Mammary epithelial cell (primary cell): ENCODE measurements at regions of chr18 and their contacts with region 1.

Region 1: GRCh38 chr18:3665780-3666525 is 216.0 kb downstream of the TGIF1 start:
- DNase-seq: peak; percentile 81
- H3K4me3 ChIP-seq: peak overlapping the region; percentile 8 to 33 (median 8)
- H3K27ac ChIP-seq: peak overlapping the region; percentile 74
- H3K4me1 ChIP-seq: peaks cover 26% of the 10 kb centered on the region
- H3K27me3 ChIP-seq: no peaks in the 10 kb centered on the region
- CTCF ChIP-seq: peak; percentile 90 to 96

Region 2: DNA sequence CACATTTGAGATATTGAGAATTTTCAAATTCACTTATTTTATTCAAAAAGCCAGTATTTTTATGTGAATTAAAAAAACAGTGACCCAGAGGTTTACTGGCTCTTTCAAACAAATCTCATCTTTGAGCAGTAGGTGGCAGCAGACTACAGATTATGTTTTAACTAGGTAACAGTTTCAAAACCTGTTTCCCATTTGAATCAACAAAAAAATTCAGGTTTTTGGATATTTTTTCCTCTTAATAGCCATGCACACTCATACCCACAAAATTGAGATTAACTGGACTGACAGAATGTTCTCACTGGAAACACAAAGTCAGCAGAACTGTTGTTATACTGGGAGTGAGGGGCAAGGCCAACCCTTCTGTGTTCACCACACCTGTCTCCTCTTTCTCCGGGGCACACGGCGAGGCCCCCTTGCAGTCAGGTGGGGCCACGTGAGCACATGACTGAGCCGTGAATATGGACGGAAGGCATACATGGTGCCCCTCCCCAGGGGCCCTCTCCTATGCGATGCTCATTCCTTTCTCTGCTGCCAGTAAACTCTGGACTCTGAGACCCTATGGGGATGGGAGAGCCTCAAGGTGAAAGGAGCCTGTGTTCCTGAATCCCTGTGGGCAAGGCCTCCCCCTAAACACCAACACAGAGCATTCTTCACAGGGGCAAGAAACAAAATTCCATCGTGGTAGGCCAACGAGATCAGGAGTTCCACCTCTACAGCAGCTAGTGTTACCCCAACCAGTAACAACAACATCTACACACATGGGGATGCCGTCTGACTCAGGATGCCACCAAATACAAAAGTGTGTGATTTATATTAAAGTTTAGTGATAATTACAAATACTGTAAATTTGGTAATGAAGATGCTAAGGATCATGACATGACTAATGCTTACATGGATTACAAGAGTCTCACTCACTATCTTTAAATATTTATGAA is 733.4 kb before region 1 on chr18:
- CTCF ChIA-PET with region 1: no interaction called
- dilution Hi-C with region 1: no loop called
- in situ Hi-C with region 1: no loop called
- intact Hi-C with region 1: loop called (anchors 2 kb)
- DNase-seq: peak; percentile 29
- H3K4me3 ChIP-seq: no peak overlapping the region
- H3K27ac ChIP-seq: no peak overlapping the region
- H3K4me1 ChIP-seq: no peaks in the 10 kb centered on the region
- H3K27me3 ChIP-seq: no peaks in the 10 kb centered on the region
- CTCF ChIP-seq: peak; percentile 61 to 65

Region 3: DNA sequence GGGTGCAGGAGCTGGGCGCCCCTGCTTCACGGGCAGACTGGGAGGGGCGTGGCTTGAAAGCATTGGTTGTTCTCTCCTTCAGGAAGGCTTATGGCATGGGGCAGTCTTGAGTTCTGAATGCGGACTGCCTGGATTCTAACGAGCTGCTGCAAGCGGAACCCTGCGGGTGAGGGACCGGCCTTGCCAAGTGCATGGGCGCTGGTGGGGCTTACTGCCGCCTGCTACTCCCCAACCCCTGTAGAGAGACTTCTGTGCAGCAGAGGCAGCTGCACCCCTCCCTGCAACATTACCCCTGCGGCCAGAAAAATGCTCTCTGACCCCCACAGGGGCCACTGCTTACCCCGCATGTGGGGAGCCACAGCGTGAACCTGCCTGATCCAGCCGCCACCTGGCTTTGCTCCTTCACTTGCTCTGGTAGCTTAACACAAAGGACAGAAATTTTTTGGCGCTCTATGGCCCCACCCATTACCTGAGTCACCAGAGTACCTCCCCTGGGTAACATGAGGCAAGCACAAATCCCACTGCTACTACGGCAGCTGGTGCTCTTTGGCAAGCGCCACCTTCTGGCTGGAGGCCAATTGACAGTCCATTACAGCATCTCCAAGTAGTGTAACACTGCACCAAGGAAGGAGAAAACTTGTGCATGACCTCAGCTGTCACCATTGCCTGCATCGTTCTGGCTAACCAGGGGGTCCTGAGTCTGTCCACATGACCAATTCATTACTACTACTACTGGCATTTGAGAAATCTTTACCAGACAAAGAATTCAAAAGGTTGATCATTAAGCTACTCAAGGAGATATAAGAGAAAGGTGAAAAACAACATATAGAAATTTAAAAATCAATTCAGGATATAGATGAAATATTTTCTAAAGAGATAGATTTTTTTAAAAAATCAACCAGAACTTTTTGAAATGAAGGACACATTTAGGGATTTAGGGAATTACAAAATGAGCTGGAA is 368.6 kb before region 1 on chr18:
- CTCF ChIA-PET with region 1: interaction called, 9 read pairs
- dilution Hi-C with region 1: no loop called
- in situ Hi-C with region 1: no loop called
- intact Hi-C with region 1: loop called (anchors 5 kb)
- DNase-seq: peak; percentile 93
- H3K4me3 ChIP-seq: peak overlapping the region; percentile 68 to 79 (median 68)
- H3K27ac ChIP-seq: peak overlapping the region; percentile 72
- H3K4me1 ChIP-seq: peaks cover 7% of the 10 kb centered on the region
- H3K27me3 ChIP-seq: no peaks in the 10 kb centered on the region
- CTCF ChIP-seq: peak; percentile 69 to 84

Region 4: DNA sequence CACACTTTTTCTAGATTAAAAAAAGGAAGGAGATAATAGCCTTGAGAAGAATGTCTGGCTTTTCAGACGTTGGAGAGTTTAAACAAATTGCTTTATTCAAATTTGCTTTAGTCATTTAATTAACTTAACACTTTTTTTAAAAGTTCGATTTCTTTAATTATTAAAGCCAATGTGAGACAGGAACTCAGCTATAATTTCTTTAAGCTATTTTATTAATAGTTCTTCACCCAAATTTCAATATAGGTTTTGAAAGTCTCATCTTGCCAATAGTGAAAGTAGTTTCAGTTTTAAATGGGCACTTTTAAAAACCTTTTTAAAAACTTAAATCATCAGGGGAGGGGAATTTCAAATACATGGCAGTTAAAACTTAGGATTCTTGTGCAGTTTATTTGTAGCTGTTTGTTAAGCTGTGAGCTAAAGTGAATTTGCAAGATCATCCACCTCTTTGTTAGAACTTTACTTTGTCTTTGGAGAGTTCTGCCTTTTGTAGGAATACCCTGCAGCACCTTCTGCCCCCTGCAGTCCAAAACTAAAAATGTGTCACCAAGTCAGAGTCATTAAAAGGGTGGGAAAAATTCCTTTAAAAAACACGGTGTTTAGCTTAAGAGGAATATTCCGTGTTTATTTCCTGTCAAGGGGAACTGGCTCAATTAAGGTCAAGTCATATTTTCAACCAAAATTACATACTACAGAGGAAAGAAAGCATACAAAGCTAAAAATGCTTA is 211.4 kb before region 1 on chr18:
- CTCF ChIA-PET with region 1: no interaction called
- dilution Hi-C with region 1: loop called (anchors 5 kb)
- in situ Hi-C with region 1: loop called in 1 of 2 experiments (anchors 5 kb)
- intact Hi-C with region 1: loop called (anchors 1 kb)
- DNase-seq: peak; percentile 46
- H3K4me3 ChIP-seq: peak overlapping the region; percentile 48 to 91 (median 75)
- H3K27ac ChIP-seq: peak overlapping the region; percentile 97
- H3K4me1 ChIP-seq: peaks cover 41% of the 10 kb centered on the region
- H3K27me3 ChIP-seq: no peaks in the 10 kb centered on the region
- CTCF ChIP-seq: peak; percentile 60 to 63

Region 5: GRCh38 chr18:3593904-3594661 is 71.9 kb before region 1 on chr18:
- CTCF ChIA-PET with region 1: interaction called, 8 read pairs
- dilution Hi-C with region 1: no loop called
- in situ Hi-C with region 1: loop called in 1 of 2 experiments (anchors 5 kb)
- intact Hi-C with region 1: loop called (anchors 1 kb)
- DNase-seq: peak; percentile 87
- H3K4me3 ChIP-seq: peak overlapping the region; percentile 45 to 56 (median 53)
- H3K27ac ChIP-seq: peak overlapping the region; percentile 99
- H3K4me1 ChIP-seq: peaks cover 49% of the 10 kb centered on the region
- H3K27me3 ChIP-seq: no peaks in the 10 kb centered on the region
- CTCF ChIP-seq: peak; percentile 92 to 95

Region 6: DNA sequence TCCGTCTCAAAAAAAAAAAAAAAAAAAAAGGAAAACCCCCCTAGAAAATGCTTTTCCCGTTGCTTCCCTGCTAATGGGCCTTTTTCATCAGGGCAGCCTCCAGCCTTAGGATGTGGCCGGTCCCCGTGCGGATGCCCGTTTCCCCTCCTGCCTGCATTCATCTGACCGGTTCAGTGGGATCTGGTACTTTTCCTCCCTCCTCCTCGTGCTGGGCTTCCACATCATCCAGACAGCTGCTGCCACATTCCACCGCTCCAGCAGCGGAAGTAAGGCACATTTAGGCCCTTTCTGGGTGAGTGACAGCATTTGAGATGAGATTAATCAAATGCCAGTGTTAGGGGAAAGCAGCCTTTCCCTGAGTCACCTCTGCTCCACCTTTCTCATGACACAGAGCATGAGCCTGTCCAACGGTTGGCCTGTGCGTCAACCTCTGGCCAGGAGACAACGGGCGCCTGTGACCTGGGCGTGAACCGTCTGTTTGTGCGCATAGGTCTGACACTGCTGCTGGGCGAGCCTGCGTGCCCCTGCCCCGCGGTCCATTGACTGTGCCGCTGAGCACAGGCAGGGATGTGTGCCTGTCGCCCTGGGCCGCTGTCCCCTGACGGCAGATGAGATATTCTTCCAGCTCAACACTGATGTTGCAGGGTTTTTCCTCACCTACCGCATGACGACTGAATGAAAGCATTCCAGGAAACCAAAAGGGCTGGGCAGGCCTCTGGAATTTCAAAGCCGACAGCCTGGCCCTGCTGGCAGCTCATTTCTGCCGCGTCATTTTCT is 42.0 kb before region 1 on chr18:
- CTCF ChIA-PET with region 1: no interaction called
- dilution Hi-C with region 1: loop called (anchors 5 kb)
- in situ Hi-C with region 1: no loop called
- intact Hi-C with region 1: loop called (anchors 1 kb)
- DNase-seq: peak; percentile 98
- H3K4me3 ChIP-seq: peak overlapping the region; percentile 18 to 43 (median 39)
- H3K27ac ChIP-seq: peak overlapping the region; percentile 100
- H3K4me1 ChIP-seq: peaks cover 40% of the 10 kb centered on the region
- H3K27me3 ChIP-seq: no peaks in the 10 kb centered on the region
- CTCF ChIP-seq: no peak

Region 7: DNA sequence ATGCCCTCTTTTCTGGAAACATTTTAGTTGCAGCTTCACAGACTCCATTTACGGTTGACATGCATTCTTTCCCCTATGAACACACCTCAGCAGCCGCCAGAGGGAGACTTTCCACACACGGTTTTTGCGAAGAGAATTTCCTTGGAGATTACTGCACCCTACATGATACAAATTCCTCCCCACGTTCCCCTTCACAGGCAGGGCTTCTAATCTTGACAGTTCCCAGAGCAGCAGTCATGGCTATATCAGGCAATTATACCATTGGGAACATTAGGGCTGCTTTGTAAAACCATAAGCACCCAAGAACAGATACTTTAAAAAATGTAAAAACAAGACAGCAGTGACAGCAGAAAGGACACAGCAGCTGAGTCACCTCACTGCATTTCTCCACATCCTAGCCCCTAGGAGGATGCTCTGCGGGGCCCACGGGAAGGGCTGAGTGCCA is 37.8 kb after region 1 on chr18:
- CTCF ChIA-PET with region 1: no interaction called
- dilution Hi-C with region 1: no loop called
- in situ Hi-C with region 1: no loop called
- intact Hi-C with region 1: no loop called
- DNase-seq: peak; percentile 39
- H3K4me3 ChIP-seq: no peak overlapping the region
- H3K27ac ChIP-seq: no peak overlapping the region
- H3K4me1 ChIP-seq: peaks cover 4% of the 10 kb centered on the region
- H3K27me3 ChIP-seq: no peaks in the 10 kb centered on the region
- CTCF ChIP-seq: peak; percentile 75 to 85

Region 8: GRCh38 chr18:3758531-3758930 is 92.6 kb after region 1 on chr18:
- CTCF ChIA-PET with region 1: no interaction called
- dilution Hi-C with region 1: loop called (anchors 5 kb)
- in situ Hi-C with region 1: no loop called
- intact Hi-C with region 1: no loop called
- DNase-seq: peak; percentile 50
- H3K4me3 ChIP-seq: no peak overlapping the region
- H3K27ac ChIP-seq: no peak overlapping the region
- H3K4me1 ChIP-seq: no peaks in the 10 kb centered on the region
- H3K27me3 ChIP-seq: no peaks in the 10 kb centered on the region
- CTCF ChIP-seq: no peak